Left cardiac atrium (tissue), 4 donors: ENCODE measurements at regions of chr20 and their contacts with region 1.

Region 1: GRCh38 chr20:37564388-37565133 is 36.9 kb upstream of the BLCAP start:
- DNase-seq: peak; percentile 56
- ATAC-seq: peak; percentile 53 to 74

Region 2: DNA sequence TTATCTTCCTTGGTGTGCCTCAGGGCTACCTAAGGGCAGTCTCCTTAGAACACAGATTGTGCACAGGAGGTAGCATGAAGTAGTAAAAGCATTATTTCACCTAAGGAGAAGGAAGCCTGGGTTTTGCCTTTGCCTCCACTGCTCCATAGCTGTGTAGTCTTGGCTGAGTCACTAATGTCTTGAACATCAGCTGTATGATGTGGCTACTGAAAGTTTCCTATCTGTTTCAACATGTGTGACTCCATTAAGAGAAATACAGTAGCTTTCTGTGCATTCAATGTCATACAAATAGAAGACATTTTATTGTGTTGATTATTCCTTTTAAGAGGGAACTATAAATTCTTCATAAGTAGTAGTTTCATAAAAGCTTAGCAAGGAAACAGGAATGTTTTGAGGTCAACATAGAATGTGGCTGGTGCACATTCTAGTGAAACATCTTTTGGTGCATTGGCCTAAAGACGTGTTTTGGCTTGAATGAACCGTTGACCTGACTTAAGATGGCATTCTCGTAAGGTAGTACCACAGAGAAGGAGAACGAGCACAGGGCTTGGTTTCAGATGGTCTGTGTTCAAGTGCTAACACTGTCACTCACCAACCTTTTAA is 199.9 kb after region 1 on chr20:
- intact Hi-C with region 1: loop called in 1 of 2 experiments (anchors 10 kb)
- DNase-seq: no peak
- ATAC-seq: no peak

Region 3: GRCh38 chr20:37901654-37902503 is 337.3 kb after region 1 on chr20:
- intact Hi-C with region 1: loop called in 1 of 2 experiments (anchors 10 kb)
- DNase-seq: no peak
- ATAC-seq: peak; percentile 50 to 61

Region 4: GRCh38 chr20:37999526-38000263 is 435.1 kb after region 1 on chr20:
- intact Hi-C with region 1: loop called in 1 of 2 experiments (anchors 5 kb)
- DNase-seq: no peak
- ATAC-seq: no peak

Region 5: DNA sequence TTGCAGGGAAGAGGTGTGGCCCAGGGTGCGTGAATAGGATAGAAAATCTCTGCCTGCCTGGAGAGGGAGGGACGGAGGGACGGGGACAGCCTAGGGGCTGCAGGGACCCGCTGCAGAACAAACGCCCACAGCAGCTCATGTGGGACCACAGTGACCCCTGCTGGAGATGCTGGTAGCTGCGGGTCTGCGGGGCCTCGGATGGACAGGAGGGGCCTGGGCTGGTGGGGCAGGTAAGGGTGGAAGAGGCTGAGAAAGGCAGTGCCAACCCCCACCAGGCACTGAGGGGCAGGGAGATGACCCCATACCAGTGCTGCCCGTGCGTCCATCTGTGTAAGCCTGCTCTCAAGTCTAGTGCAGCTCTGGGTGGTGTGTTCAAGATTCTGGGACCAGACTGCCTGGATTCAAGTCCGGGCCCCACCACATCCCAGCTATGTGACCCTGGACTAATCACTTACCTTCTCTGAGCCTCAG is 656.6 kb after region 1 on chr20:
- intact Hi-C with region 1: loop called (anchors 5 kb)
- DNase-seq: peak; percentile 71
- ATAC-seq: peak; percentile 46 to 68

Region 6: GRCh38 chr20:38321959-38322598 is 757.5 kb after region 1 on chr20:
- intact Hi-C with region 1: loop called in 1 of 2 experiments (anchors 10 kb)
- DNase-seq: peak; percentile 54
- ATAC-seq: peak; percentile 70 to 72